ENCODE measurements at regions of chr4 and their contacts with region 1.

Region 1: DNA sequence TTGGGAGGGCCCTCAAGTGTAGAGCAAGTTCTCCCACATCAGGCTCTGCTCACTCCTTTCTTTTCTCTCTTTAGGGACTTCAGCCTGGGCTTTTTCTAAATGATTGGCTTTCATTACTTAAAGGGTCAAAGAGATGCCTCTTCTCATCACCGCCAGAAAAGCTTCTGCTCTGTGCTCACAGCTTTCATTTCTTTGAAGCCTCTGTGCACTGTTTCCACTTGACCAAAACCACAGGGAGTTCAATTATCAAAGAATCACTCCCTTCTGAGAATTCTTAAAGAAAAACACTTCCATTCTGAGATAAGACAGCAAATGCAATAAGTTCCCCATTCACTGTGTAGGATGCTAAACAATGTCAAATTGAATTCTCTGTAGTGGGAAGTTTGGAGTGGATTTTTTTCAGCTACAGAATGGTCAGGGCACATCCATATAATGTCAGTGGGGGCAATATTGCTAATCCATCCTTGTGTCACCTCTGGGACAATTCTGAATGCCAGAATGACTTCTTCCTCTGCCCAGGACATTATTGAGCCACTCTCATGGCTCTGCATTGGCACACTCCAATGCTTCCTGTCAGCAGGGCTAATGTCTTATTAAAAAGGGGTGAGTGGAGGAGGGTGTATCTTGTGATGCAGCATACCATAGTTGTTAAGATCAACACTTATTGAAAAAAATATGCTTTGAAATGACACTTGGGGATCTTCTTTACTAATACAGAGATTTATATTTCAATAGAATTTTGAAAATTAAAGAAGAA is 217.6 kb downstream of the SNCA start:
- DNase-seq: peak; percentile 21
- H3K4me3 Mint-ChIP-seq: peak overlapping the region; percentile 55
- H3K27ac Mint-ChIP-seq: peak overlapping the region; percentile 74
- H3K4me1 Mint-ChIP-seq: peaks cover 43% of the 10 kb centered on the region
- H3K27me3 Mint-ChIP-seq: peaks cover 7% of the 10 kb centered on the region

Region 2: GRCh38 chr4:89024051-89024675 is 595.2 kb before region 1 on chr4:
- intact Hi-C with region 1: no loop called
- DNase-seq: peak; percentile 14
- H3K4me3 Mint-ChIP-seq: no peak overlapping the region
- H3K27ac Mint-ChIP-seq: no peak overlapping the region
- H3K4me1 Mint-ChIP-seq: no peaks in the 10 kb centered on the region
- H3K27me3 Mint-ChIP-seq: peaks cover 2% of the 10 kb centered on the region

Region 3: DNA sequence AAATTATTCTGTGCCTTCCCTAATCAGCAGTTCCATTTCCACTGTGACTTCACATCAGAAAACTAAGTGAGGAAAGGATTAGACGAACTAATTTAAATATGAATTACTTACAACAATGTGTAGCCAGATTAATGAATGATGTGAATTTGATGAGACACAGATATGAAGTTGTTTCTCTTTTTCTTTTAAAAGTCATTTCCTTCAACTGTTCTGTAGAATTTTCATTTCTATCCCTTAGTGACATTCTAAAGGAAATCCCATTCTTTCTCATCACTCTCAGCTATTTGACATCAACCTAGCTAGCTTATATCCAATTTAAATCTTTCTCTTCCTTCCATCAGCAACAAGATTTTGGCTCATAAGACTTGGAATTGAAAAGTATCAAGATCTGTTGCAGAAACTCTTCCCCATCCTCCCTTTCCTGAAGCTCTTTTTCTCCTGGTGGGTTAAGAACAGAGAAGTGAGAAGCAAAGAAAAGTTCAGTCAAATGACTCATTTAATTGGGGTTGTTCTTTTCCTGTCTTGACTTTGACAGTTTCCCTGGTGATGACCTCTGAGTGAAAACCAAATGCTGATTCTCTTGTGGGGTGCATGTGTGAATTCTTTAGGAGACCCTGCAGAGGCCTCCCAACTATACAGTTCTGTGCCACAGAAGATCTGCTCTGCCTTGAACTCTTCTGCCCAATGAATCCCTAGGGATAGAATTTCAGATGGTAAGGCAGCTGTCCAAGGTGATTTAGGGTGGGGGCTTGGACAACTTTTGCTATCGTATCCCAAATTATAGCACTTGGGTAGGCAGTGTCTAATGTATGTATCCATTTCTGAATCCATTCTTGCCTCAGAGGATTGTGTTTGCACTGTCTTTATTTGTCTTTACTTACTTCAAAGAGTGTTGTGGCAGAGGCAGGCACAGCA is 79.3 kb before region 1 on chr4:
- intact Hi-C with region 1: loop called (anchors 1 kb)
- DNase-seq: no peak
- H3K4me3 Mint-ChIP-seq: no peak overlapping the region
- H3K27ac Mint-ChIP-seq: peak overlapping the region; percentile 71
- H3K4me1 Mint-ChIP-seq: peaks cover 18% of the 10 kb centered on the region
- H3K27me3 Mint-ChIP-seq: peaks cover 6% of the 10 kb centered on the region

Region 4: DNA sequence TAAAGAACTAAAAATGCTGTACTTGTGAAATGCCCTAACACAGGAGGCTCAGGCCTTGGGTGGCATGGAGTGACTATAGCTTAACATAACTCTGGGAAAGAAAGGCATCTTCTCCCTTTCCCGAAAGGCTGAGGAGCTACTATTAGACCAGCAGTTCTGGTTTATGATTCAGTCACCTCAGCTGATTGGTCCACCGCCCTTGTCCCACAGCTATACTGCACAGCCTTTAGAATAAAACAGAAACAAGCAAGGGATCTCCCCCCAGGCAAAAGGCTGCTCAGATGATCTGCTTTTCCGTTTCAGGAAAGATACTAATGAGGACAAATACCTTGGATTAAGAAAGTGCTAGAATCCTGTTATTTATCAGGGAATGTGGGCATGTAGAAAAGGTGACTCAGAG is 46.3 kb after region 1 on chr4:
- intact Hi-C with region 1: no loop called
- DNase-seq: no peak
- H3K4me3 Mint-ChIP-seq: no peak overlapping the region
- H3K27ac Mint-ChIP-seq: no peak overlapping the region
- H3K4me1 Mint-ChIP-seq: peaks cover 1% of the 10 kb centered on the region
- H3K27me3 Mint-ChIP-seq: peaks cover 24% of the 10 kb centered on the region